Thyroid gland (tissue), 4 donors: ENCODE measurements at regions of chr22 and their contacts with region 1.

Region 1: GRCh38 chr22:45994491-45995404 is 17.8 kb upstream of the WNT7B start:
- DNase-seq: peak; percentile 75 to 83
- H3K4me3 ChIP-seq: no peak overlapping the region
- H3K27ac ChIP-seq: no peak overlapping the region
- H3K4me1 ChIP-seq: peaks cover 34 to 53% of the 10 kb centered on the region in 2 donors
- H3K27me3 ChIP-seq: no peaks in the 10 kb centered on the region
- CTCF ChIP-seq: peak; percentile 93 to 97 (median 96)
- POLR2A ChIP-seq: no peak

Region 2: GRCh38 chr22:46131151-46131587 is 136.4 kb after region 1 on chr22:
- intact Hi-C with region 1: no loop called
- DNase-seq: no peak
- H3K4me3 ChIP-seq: no peak overlapping the region
- H3K27ac ChIP-seq: no peak overlapping the region
- H3K4me1 ChIP-seq: peaks cover 0 to 8% of the 10 kb centered on the region in 2 donors
- H3K27me3 ChIP-seq: no peaks in the 10 kb centered on the region
- CTCF ChIP-seq: peak in 1 of 6 experiments; percentile 5
- POLR2A ChIP-seq: no peak

Region 3: GRCh38 chr22:46303347-46303965 is 308.7 kb after region 1 on chr22:
- intact Hi-C with region 1: loop called (anchors 2 kb)
- DNase-seq: no peak
- H3K4me3 ChIP-seq: no peak overlapping the region
- H3K27ac ChIP-seq: no peak overlapping the region
- H3K4me1 ChIP-seq: no peaks in the 10 kb centered on the region
- H3K27me3 ChIP-seq: no peaks in the 10 kb centered on the region
- CTCF ChIP-seq: no peak
- POLR2A ChIP-seq: no peak